ENCODE measurements at regions of chr6 and their contacts with region 1.

Region 1: DNA sequence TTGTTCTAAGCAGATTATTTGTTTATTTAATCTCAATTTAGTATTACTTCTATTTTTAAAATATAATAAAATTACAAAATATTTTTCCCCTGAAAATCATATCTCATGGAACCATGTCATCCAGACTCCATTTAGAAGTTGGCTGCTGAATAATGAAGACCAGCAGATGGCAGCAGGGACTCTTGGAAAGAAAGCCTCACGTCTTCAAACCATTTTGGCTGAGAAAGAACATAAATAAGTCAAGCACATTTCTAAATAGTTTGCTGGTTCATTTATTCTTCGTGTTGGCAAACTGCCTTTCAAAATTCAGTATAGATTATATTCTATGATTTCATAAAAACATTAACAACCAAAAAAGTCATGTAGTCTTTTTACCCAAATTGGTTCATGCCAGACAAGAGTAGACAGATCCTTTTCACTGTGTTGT is 71.7 kb downstream of the RCAN2 start:
- DNase-seq: peak; percentile 50
- H3K4me3 Mint-ChIP-seq: no peak overlapping the region
- H3K27ac Mint-ChIP-seq: no peak overlapping the region
- H3K4me1 Mint-ChIP-seq: no peaks in the 10 kb centered on the region
- H3K27me3 Mint-ChIP-seq: peaks cover 17% of the 10 kb centered on the region

Region 2: DNA sequence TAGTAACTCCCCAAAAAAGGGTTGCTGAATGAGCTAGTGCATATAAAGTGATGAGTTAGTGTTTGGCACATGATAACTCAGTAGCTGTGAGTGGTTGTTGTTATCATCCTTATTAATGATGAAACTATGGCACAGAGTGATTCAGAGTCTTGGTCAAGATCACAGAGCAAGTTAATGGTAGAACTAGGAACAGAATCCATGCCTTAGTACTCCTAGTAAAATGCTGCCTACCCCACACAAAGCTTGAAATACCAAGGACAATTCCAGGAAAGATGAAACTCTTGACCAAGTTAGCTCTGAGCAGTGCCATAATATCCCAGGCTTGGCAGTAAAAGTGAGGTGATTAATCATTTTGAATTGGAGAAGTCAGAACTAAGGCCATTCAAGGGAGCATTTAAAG is 139.7 kb before region 1 on chr6:
- CTCF ChIA-PET with region 1: no interaction called
- POLR2A ChIA-PET with region 1: no interaction called
- intact Hi-C with region 1: no loop called
- DNase-seq: no peak
- H3K4me3 Mint-ChIP-seq: no peak overlapping the region
- H3K27ac Mint-ChIP-seq: no peak overlapping the region
- H3K4me1 Mint-ChIP-seq: no peaks in the 10 kb centered on the region
- H3K27me3 Mint-ChIP-seq: peaks cover 9% of the 10 kb centered on the region

Region 3: DNA sequence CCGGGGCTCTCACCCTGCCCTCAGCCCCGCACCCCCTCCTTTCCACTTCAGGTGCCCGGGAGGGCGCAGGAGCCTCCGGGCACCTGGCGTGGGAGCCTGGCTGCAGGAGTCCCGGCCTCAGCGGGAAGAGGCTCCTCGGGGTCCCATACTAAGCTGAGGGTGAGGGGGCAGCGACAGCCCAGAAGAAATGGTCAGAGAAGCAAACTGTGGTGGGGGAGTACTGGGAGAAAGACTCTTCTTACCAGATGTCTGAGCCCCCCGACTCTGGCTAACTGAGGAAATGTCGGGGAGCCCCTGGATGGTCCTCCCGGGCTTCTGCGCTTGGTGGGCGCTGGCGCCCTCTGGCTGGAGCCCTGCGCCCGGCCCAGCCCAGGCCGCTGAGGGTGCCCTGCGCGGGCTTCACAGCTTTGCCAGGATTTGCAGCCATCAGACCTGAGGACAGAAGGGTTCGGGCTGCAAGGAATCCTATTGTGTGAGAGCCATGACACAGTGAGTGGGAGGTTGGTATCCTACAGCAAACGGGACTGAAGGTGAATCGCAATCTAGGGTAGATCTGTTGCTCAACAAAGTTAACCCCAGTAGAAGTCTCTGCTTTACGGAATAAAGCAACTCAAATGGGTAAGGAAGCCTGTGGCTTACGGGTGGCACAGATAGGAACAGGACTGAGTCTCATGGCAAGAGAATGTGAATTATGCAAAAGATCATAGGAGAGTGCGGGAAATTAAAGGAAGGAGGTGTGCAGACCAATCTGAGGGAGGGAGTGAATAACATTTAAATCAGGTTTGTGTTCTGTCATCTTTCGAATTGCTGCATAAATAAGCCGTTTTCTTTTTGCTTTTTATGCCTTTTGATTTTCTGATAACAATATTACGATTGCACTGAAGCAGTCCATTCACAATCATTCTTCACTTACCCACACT is 72.3 kb after region 1 on chr6:
- CTCF ChIA-PET with region 1: no interaction called
- POLR2A ChIA-PET with region 1: no interaction called
- intact Hi-C with region 1: loop called (anchors 2 kb)
- DNase-seq: peak; percentile 11
- H3K4me3 Mint-ChIP-seq: no peak overlapping the region
- H3K27ac Mint-ChIP-seq: no peak overlapping the region
- H3K4me1 Mint-ChIP-seq: peaks cover 12% of the 10 kb centered on the region
- H3K27me3 Mint-ChIP-seq: peaks cover 55% of the 10 kb centered on the region

Region 4: GRCh38 chr6:46626228-46626909 is 206.8 kb after region 1 on chr6:
- CTCF ChIA-PET with region 1: no interaction called
- POLR2A ChIA-PET with region 1: no interaction called
- intact Hi-C with region 1: loop called (anchors 1 kb)
- DNase-seq: no peak
- H3K4me3 Mint-ChIP-seq: no peak overlapping the region
- H3K27ac Mint-ChIP-seq: no peak overlapping the region
- H3K4me1 Mint-ChIP-seq: peaks cover 10% of the 10 kb centered on the region
- H3K27me3 Mint-ChIP-seq: peaks cover 9% of the 10 kb centered on the region

Region 5: GRCh38 chr6:46781478-46782378 is 362.1 kb after region 1 on chr6:
- CTCF ChIA-PET with region 1: no interaction called
- POLR2A ChIA-PET with region 1: no interaction called
- intact Hi-C with region 1: loop called (anchors 1 kb)
- DNase-seq: peak; percentile 24
- H3K4me3 Mint-ChIP-seq: no peak overlapping the region
- H3K27ac Mint-ChIP-seq: no peak overlapping the region
- H3K4me1 Mint-ChIP-seq: no peaks in the 10 kb centered on the region
- H3K27me3 Mint-ChIP-seq: peaks cover 3% of the 10 kb centered on the region

Region 6: GRCh38 chr6:47047479-47048407 is 628.2 kb after region 1 on chr6:
- CTCF ChIA-PET with region 1: interaction called, 3 read pairs
- POLR2A ChIA-PET with region 1: no interaction called
- intact Hi-C with region 1: loop called (anchors 5 kb)
- DNase-seq: peak; percentile 31
- H3K4me3 Mint-ChIP-seq: no peak overlapping the region
- H3K27ac Mint-ChIP-seq: no peak overlapping the region
- H3K4me1 Mint-ChIP-seq: no peaks in the 10 kb centered on the region
- H3K27me3 Mint-ChIP-seq: peaks cover 4% of the 10 kb centered on the region